K562 (cell line): ENCODE measurements at regions of chr19 and their contacts with region 1.

Region 1: DNA sequence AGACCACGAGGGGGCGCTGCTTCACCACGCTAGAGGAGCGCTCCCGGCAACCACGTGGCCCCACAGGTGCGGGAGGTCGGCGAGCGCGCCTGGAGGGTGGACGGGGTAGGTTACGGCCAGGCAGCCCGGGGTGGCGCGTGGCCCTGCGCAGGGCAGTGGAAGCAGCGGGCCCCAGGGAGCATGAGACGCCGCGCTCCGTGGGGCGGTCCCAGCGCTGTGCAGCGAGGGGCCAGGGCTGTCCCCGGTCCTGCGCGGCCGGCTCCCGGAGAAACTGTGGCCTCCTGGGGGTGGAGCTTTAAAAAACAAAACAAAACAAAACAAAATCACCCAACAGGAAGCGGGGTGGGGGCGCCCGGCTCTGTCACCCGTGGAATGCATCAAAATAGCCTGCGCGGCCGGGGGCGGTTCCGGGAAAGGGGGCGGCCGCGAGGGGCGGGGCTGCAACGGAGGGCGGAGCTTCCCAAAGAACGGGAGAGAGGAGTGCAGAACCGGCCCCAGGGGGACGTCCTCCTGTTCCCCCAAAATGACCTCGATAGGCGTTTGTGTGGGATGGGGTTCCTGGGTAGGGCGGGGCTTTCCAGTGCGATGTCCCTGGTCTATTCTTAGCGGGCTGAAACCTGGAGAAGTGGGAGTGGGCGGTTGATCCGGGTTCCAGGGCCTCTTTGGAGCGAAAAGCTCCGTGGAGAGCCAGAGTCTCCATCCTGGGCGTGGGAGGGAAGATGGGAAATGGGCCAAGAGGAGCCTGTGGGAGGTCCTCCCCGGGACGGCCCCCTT is 27.3 kb downstream of the NUMBL start:
- DNase-seq: peak; percentile 87 to 94 (median 90)
- ATAC-seq: peak; percentile 90
- H3K4me3 ChIP-seq: peak overlapping the region; percentile 75
- H3K27ac ChIP-seq: peak overlapping the region; percentile 94
- H3K4me1 ChIP-seq: peaks cover 39 to 57% of the 10 kb centered on the region in 2 experiments
- H3K27me3 ChIP-seq: no peaks in the 10 kb centered on the region
- CTCF ChIP-seq: peak in 2 of 3 experiments; percentile 94 to 96; a peak in 3 of 6 replicates
- EP300 ChIP-seq: no peak
- POLR2A ChIP-seq: peak; percentile 49; the same call in 1 of the 2 replicates
- RAD21 ChIP-seq: peak; percentile 97 to 98

Region 2: GRCh38 chr19:40381321-40381720 is 281.8 kb before region 1 on chr19:
- CTCF ChIA-PET with region 1: no interaction called
- POLR2A ChIA-PET with region 1: no interaction called
- in situ Hi-C with region 1: no loop called
- intact Hi-C with region 1: no loop called
- DNase-seq: no peak
- ATAC-seq: peak; percentile 32; the same call in 2 of the 3 replicates
- H3K4me3 ChIP-seq: no peak overlapping the region
- H3K27ac ChIP-seq: no peak overlapping the region
- H3K4me1 ChIP-seq: peaks cover 0 to 36% of the 10 kb centered on the region in 2 experiments; a peak in 2 of 5 replicates
- H3K27me3 ChIP-seq: peaks cover 0 to 6% of the 10 kb centered on the region in 2 experiments; a peak in 1 of 5 replicates
- CTCF ChIP-seq: peak in 2 of 3 experiments; percentile 8 to 28; a peak in 1 of 6 replicates
- EP300 ChIP-seq: no peak
- POLR2A ChIP-seq: no peak
- RAD21 ChIP-seq: no peak

Region 3: GRCh38 chr19:40702337-40703012 is 39.4 kb after region 1 on chr19:
- CTCF ChIA-PET with region 1: interaction called, 21 read pairs
- POLR2A ChIA-PET with region 1: interaction called, 5 read pairs
- in situ Hi-C with region 1: no loop called
- intact Hi-C with region 1: loop called (anchors 1 kb)
- DNase-seq: peak; percentile 75 to 89 (median 82)
- ATAC-seq: peak; percentile 100
- H3K4me3 ChIP-seq: no peak overlapping the region
- H3K27ac ChIP-seq: peak overlapping the region; percentile 27; the same call in 2 of the 3 replicates
- H3K4me1 ChIP-seq: peaks cover 12 to 27% of the 10 kb centered on the region in 2 experiments; a peak in 4 of 5 replicates
- H3K27me3 ChIP-seq: no peaks in the 10 kb centered on the region
- CTCF ChIP-seq: peak; percentile 94
- EP300 ChIP-seq: peak; percentile 17; the same call in 1 of the 2 replicates
- POLR2A ChIP-seq: no peak
- RAD21 ChIP-seq: peak; percentile 72 to 91

Region 4: GRCh38 chr19:40726279-40726678 is 63.2 kb after region 1 on chr19:
- CTCF ChIA-PET with region 1: no interaction called
- POLR2A ChIA-PET with region 1: no interaction called
- in situ Hi-C with region 1: no loop called
- intact Hi-C with region 1: no loop called
- DNase-seq: no peak
- ATAC-seq: no peak
- H3K4me3 ChIP-seq: no peak overlapping the region
- H3K27ac ChIP-seq: no peak overlapping the region
- H3K4me1 ChIP-seq: no peaks in the 10 kb centered on the region; a peak in 1 of 5 replicates
- H3K27me3 ChIP-seq: no peaks in the 10 kb centered on the region
- CTCF ChIP-seq: no peak
- EP300 ChIP-seq: no peak
- POLR2A ChIP-seq: no peak
- RAD21 ChIP-seq: no peak

Region 5: GRCh38 chr19:40750059-40750873 is 87.2 kb after region 1 on chr19 and contains the start of gene ACTMAP:
- CTCF ChIA-PET with region 1: interaction called, 3 read pairs
- POLR2A ChIA-PET with region 1: interaction called, 12 read pairs
- in situ Hi-C with region 1: no loop called
- intact Hi-C with region 1: no loop called
- DNase-seq: peak; percentile 98 to 100 (median 98)
- ATAC-seq: peak; percentile 92
- H3K4me3 ChIP-seq: peak within 1 kb of the TSS; percentile 59
- H3K27ac ChIP-seq: peak within 1 kb of the TSS; percentile 99
- H3K4me1 ChIP-seq: peaks cover 31 to 40% of the 10 kb centered on the region in 2 experiments
- H3K27me3 ChIP-seq: no peaks in the 10 kb centered on the region
- CTCF ChIP-seq: no peak
- EP300 ChIP-seq: no peak
- POLR2A ChIP-seq: peak; percentile 73
- RAD21 ChIP-seq: 0 out of 4 replicates have a peak, but pooled peaks of 1 of the 2 experiments have one; percentile 7
- polyA plus RNA-seq, gene ACTMAP: 4.8 to 5.1 TPM

Region 6: DNA sequence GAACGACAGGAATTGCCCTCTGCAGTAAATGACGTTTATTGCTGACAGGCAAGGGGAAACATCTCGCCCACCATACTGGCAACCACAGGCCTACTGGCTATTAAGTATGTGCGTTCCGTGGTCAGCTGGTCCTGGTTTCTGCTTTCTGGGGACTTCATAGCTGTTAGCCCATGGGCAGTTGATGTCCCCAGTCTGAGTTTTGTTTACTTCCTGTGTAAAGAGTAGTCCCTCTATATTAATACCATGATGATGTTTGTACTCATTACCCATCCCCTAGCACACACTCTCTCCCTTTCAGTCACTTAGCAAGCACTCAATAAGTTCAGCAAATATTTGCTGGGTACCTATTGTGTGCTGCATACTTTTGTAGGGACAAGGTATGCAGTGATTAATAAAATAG is 105.8 kb after region 1 on chr19:
- CTCF ChIA-PET with region 1: no interaction called
- POLR2A ChIA-PET with region 1: no interaction called
- in situ Hi-C with region 1: no loop called
- intact Hi-C with region 1: no loop called
- DNase-seq: no peak
- ATAC-seq: no peak
- H3K4me3 ChIP-seq: no peak overlapping the region
- H3K27ac ChIP-seq: no peak overlapping the region
- H3K4me1 ChIP-seq: no peaks in the 10 kb centered on the region
- H3K27me3 ChIP-seq: no peaks in the 10 kb centered on the region
- CTCF ChIP-seq: no peak
- EP300 ChIP-seq: no peak
- POLR2A ChIP-seq: no peak
- RAD21 ChIP-seq: no peak

Region 7: DNA sequence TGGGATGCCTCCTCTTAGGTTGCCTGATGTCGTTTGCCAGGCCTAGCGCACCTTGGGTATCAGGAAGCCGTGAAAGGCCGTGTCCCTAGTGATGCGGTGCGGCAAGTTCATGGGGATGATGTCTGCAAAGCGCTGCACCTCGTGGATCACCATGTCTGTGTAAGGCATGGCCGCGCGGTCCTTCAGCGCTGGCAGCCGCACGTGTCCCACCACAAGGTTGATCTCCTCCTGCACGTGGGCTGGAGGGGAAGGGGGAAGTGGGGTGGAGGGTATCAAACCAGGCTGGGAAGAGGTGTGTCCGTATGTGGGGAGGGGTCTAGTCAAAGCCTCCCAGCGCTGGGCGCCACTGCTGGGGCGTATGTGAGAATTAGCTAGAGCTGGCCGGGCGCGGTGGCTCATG is 159.1 kb after region 1 on chr19:
- CTCF ChIA-PET with region 1: no interaction called
- POLR2A ChIA-PET with region 1: no interaction called
- in situ Hi-C with region 1: no loop called
- intact Hi-C with region 1: loop called (anchors 5 kb)
- DNase-seq: no peak
- ATAC-seq: no peak
- H3K4me3 ChIP-seq: no peak overlapping the region
- H3K27ac ChIP-seq: peak overlapping the region; percentile 84
- H3K4me1 ChIP-seq: peaks cover 45 to 59% of the 10 kb centered on the region in 2 experiments
- H3K27me3 ChIP-seq: no peaks in the 10 kb centered on the region
- CTCF ChIP-seq: no peak
- EP300 ChIP-seq: no peak
- POLR2A ChIP-seq: no peak
- RAD21 ChIP-seq: no peak

Region 8: DNA sequence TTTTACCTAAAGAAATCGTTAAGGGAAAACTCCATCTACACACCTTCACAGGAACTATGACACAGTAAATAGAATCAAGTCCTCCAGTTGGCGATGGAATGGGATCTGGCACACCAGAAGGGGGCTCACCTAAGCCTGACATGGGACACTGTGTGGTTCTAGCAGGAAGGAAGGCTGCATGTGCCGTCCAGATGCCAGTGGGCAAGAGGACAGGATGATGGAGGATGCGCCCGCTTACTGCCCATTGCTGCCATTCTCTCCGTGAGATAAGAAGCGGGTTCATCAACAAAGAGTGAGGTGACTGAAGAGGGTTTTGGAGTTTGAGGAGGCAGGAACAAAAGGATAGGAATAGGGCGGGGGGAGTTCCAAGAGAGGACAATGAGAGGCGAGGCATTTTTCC is 448.2 kb after region 1 on chr19:
- CTCF ChIA-PET with region 1: no interaction called
- POLR2A ChIA-PET with region 1: no interaction called
- in situ Hi-C with region 1: no loop called
- intact Hi-C with region 1: no loop called
- DNase-seq: no peak
- ATAC-seq: no peak
- H3K4me3 ChIP-seq: no peak overlapping the region
- H3K27ac ChIP-seq: no peak overlapping the region
- H3K4me1 ChIP-seq: no peaks in the 10 kb centered on the region
- H3K27me3 ChIP-seq: peaks cover 7 to 26% of the 10 kb centered on the region in 2 experiments; a peak in 3 of 5 replicates
- CTCF ChIP-seq: no peak
- EP300 ChIP-seq: no peak
- POLR2A ChIP-seq: no peak
- RAD21 ChIP-seq: no peak